Mammary epithelial cell (primary cell): ENCODE measurements at regions of chr1 and their contacts with region 1.

Region 1: GRCh38 chr1:22451702-22452474 is at the start of gene ZBTB40:
- DNase-seq: peak; percentile 94
- H3K4me3 ChIP-seq: peak within 1 kb of the TSS; percentile 68 to 76 (median 74)
- H3K27ac ChIP-seq: peak within 1 kb of the TSS; percentile 56
- H3K4me1 ChIP-seq: no peaks in the 10 kb centered on the region
- H3K27me3 ChIP-seq: no peaks in the 10 kb centered on the region
- CTCF ChIP-seq: peak in 1 of 2 donors; percentile 7
- total RNA-seq, gene ZBTB40: 10.8 to 13.6 TPM

Region 2: DNA sequence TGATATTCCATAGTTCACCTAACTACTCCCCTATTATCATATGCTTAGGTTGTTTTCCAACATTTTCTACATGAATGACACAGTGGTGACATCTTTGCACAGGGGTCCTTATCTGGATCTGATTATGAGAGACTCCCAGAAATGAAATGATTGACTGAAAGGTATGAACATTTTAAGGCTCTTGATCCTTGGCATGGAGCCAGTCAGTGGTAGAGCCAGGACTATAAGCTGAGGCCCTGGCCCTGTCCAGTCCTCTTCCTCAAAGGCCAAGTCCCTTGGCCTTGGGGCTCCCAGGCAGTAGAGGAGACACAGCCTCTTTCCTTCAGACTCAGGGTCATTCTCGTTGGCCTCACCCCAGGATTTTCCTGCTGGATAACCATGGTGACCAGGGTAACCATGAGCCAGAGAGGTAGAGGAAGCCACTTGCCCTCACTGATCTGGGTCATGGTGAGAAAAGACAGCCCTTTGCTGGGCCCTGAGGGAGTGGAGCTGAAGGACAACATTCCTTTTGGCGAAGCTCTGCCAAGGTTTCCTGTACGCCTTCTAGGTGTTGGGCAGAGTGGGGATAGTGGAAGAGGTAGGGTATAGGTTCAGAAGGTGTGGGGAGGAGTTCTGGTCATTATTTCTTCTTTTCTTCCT is 256.0 kb before region 1 on chr1:
- CTCF ChIA-PET with region 1: no interaction called
- dilution Hi-C with region 1: no loop called
- in situ Hi-C with region 1: no loop called
- intact Hi-C with region 1: no loop called
- DNase-seq: no peak
- H3K4me3 ChIP-seq: no peak overlapping the region
- H3K27ac ChIP-seq: no peak overlapping the region
- H3K4me1 ChIP-seq: no peaks in the 10 kb centered on the region
- H3K27me3 ChIP-seq: no peaks in the 10 kb centered on the region
- CTCF ChIP-seq: no peak

Region 3: DNA sequence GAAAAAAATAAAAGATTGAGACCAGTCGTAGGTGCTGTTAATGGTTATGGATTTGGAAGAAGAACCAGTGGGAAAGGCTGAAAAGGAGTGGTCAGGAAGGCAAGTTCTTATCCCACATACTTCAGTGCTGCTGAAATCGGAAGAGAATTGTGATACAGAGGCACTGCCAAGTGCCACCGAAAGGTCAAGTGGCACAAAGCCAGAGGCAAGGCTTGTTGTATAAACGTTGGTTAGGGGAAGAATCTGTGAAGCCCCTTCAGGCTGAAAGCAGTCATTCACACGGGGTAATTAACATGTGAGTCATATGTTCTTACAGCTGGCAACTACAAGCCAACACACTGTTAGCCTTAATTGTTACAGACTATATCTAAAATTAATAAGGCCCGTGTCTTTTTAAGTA is 48.6 kb after region 1 on chr1:
- CTCF ChIA-PET with region 1: no interaction called
- dilution Hi-C with region 1: no loop called
- in situ Hi-C with region 1: no loop called
- intact Hi-C with region 1: loop called (anchors 5 kb)
- DNase-seq: peak; percentile 67
- H3K4me3 ChIP-seq: no peak overlapping the region
- H3K27ac ChIP-seq: no peak overlapping the region
- H3K4me1 ChIP-seq: peaks cover 13% of the 10 kb centered on the region
- H3K27me3 ChIP-seq: no peaks in the 10 kb centered on the region
- CTCF ChIP-seq: no peak